ENCODE measurements at regions of chr6 and their contacts with region 1.

Region 1: GRCh38 chr6:44074439-44075136 is 52.7 kb downstream of the MRPL14 start:
- DNase-seq: peak; percentile 83
- ATAC-seq: peak; percentile 36
- H3K4me3 ChIP-seq: peak overlapping the region in 1 of 5 experiments; percentile 12
- H3K4me3 Mint-ChIP-seq: peak overlapping the region; percentile 95
- H3K27ac ChIP-seq: no peak overlapping the region
- H3K27ac Mint-ChIP-seq: no peak overlapping the region
- H3K4me1 ChIP-seq: peaks cover 19 to 28% of the 10 kb centered on the region in 2 donors
- H3K4me1 Mint-ChIP-seq: peaks cover 17% of the 10 kb centered on the region
- H3K27me3 ChIP-seq: peaks cover 0 to 50% (median 17%) of the 10 kb centered on the region in 4 experiments
- H3K27me3 Mint-ChIP-seq: peaks cover 49% of the 10 kb centered on the region
- CTCF ChIP-seq: peak; percentile 86

Region 2: GRCh38 chr6:43673444-43674084 is 401.0 kb before region 1 on chr6:
- CTCF ChIA-PET with region 1: interaction called, 102 read pairs
- POLR2A ChIA-PET with region 1: no interaction called
- intact Hi-C with region 1: no loop called
- DNase-seq: no peak
- ATAC-seq: no peak
- H3K4me3 ChIP-seq: no peak overlapping the region
- H3K4me3 Mint-ChIP-seq: no peak overlapping the region
- H3K27ac ChIP-seq: no peak overlapping the region
- H3K27ac Mint-ChIP-seq: no peak overlapping the region
- H3K4me1 ChIP-seq: no peaks in the 10 kb centered on the region
- H3K4me1 Mint-ChIP-seq: peaks cover 2% of the 10 kb centered on the region
- H3K27me3 ChIP-seq: no peaks in the 10 kb centered on the region
- H3K27me3 Mint-ChIP-seq: no peaks in the 10 kb centered on the region
- CTCF ChIP-seq: no peak

Region 3: GRCh38 chr6:43769526-43770416 is 304.8 kb before region 1 on chr6 and contains the start of gene VEGFA:
- CTCF ChIA-PET with region 1: interaction called, 103 read pairs
- POLR2A ChIA-PET with region 1: no interaction called
- intact Hi-C with region 1: loop called (anchors 1 kb)
- DNase-seq: peak; percentile 91
- ATAC-seq: peak; percentile 77
- H3K4me3 ChIP-seq: peak within 1 kb of the TSS; percentile 54 to 71 (median 65)
- H3K4me3 Mint-ChIP-seq: peak within 1 kb of the TSS; percentile 84
- H3K27ac ChIP-seq: peak within 1 kb of the TSS in 1 of 2 donors; percentile 41
- H3K27ac Mint-ChIP-seq: peak within 1 kb of the TSS; percentile 72
- H3K4me1 ChIP-seq: peaks cover 7 to 25% of the 10 kb centered on the region in 2 donors
- H3K4me1 Mint-ChIP-seq: peaks cover 22% of the 10 kb centered on the region
- H3K27me3 ChIP-seq: peaks cover 0 to 42% (median 18%) of the 10 kb centered on the region in 4 experiments
- H3K27me3 Mint-ChIP-seq: peaks cover 24% of the 10 kb centered on the region
- CTCF ChIP-seq: peak; percentile 98
- total RNA-seq, gene VEGFA: 3.9 and 4.9 TPM in 2 replicates

Region 4: DNA sequence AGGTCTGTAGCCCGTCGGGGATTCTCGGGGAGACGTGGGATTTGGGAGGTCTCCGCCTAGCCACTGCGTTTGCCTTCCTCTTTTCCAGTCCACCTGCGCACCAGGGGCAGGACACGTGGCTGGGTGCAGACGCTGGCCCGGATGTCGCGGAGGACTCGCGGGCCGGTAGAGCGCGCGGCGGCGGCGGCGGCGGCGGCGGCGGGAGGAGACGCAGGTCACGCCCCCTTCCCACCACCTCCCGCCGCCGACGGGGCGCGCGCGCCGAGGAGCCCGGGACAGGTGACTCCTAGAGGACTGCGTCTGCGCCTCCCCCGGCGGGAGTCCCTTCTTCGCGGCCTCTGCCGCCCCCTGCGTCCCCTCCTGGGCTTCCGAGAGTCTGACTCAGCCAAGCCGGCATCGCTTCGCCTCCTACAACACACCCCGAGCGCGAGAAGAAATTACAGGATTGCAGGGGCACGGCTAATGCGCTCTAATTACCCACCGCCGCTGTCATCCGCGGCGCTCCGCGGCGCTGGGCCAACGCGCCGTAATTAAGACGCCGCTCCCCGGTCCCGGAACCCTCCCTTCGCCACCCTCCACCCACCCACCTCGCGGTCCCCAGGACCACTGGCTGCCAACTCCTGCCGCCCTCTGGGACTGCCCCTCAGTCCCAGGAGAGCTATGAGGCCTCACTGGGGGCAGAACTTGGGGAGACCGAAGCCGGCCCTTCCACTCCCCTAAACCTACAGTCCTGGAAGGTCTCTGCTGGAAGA is 71.8 kb before region 1 on chr6:
- CTCF ChIA-PET with region 1: no interaction called
- POLR2A ChIA-PET with region 1: no interaction called
- intact Hi-C with region 1: loop called (anchors 5 kb)
- DNase-seq: peak; percentile 72
- ATAC-seq: peak; percentile 63
- H3K4me3 ChIP-seq: peak overlapping the region in 4 of 5 experiments; percentile 29 to 57 (median 50)
- H3K4me3 Mint-ChIP-seq: peak overlapping the region; percentile 83
- H3K27ac ChIP-seq: no peak overlapping the region
- H3K27ac Mint-ChIP-seq: no peak overlapping the region
- H3K4me1 ChIP-seq: peaks cover 23 to 27% of the 10 kb centered on the region in 2 donors
- H3K4me1 Mint-ChIP-seq: peaks cover 30% of the 10 kb centered on the region
- H3K27me3 ChIP-seq: peaks cover 0 to 60% (median 28%) of the 10 kb centered on the region in 4 experiments
- H3K27me3 Mint-ChIP-seq: peaks cover 36% of the 10 kb centered on the region
- CTCF ChIP-seq: no peak

Region 5: DNA sequence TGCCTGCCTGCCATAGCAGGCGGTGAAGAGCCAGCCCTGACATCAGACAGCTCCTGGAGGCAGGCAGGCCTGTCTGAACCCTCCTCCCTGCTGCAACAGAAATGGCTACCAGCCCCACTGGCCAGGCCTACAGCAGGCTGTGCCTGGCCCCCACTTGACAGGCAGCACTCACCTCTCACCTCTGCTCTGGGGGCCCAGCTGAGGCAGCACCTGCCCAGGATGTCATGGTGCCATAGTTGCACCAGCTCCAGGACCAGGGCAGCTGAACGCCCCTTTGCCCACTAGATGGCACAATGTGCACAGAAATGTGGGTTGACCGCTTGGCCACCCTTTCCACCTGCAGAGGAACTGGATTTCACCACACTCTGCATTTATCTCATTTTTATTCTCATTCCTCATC is 22.0 kb after region 1 on chr6:
- CTCF ChIA-PET with region 1: interaction called, 18 read pairs
- POLR2A ChIA-PET with region 1: no interaction called
- intact Hi-C with region 1: no loop called
- DNase-seq: peak; percentile 84
- ATAC-seq: peak; percentile 89
- H3K4me3 ChIP-seq: no peak overlapping the region
- H3K4me3 Mint-ChIP-seq: no peak overlapping the region
- H3K27ac ChIP-seq: no peak overlapping the region
- H3K27ac Mint-ChIP-seq: no peak overlapping the region
- H3K4me1 ChIP-seq: no peaks in the 10 kb centered on the region
- H3K4me1 Mint-ChIP-seq: no peaks in the 10 kb centered on the region
- H3K27me3 ChIP-seq: no peaks in the 10 kb centered on the region
- H3K27me3 Mint-ChIP-seq: no peaks in the 10 kb centered on the region
- CTCF ChIP-seq: peak; percentile 79